Sigmoid colon (tissue), 7 donors: ENCODE measurements at regions of chr2 and their contacts with region 1.

Region 1: GRCh38 chr2:189014449-189015138 is 40.4 kb downstream of the COL3A1 start:
- DNase-seq: no peak
- H3K4me3 ChIP-seq: no peak overlapping the region
- H3K27ac ChIP-seq: peak overlapping the region; percentile 24 to 52 (median 51)
- H3K4me1 ChIP-seq: peaks cover 0 to 34% (median 14%) of the 10 kb centered on the region in 4 donors
- H3K27me3 ChIP-seq: no peaks in the 10 kb centered on the region
- CTCF ChIP-seq: no peak
- EP300 ChIP-seq: no peak
- POLR2A ChIP-seq: no peak

Region 2: DNA sequence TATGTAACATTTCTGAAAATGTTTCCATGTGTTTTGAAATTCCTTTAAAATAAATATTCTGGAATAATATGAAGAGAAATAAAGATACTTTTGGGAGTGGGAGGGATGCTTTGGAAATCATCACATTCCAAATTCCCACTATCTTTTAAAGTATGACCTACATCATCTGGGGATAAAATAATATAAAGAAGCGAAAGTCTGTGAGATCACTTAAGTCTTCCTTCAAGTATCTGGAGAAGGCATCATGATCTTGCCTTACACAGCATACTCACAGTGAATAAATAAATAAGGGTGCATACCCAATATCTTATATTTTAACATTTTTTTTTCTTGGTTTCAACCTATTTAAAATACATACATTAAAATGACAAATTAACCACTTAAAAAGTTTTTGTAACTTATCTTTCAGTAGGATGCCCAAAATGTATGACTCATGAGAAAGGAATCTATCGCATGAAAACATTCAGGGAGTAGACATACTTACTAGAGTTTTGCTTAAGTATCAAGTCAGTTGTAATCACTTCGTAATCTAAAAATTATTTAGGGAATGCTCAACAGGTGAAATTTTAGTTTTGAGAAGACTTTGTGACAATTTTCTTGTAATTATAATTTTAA is 288.7 kb before region 1 on chr2:
- intact Hi-C with region 1: no loop called
- DNase-seq: no peak
- H3K4me3 ChIP-seq: no peak overlapping the region
- H3K27ac ChIP-seq: no peak overlapping the region
- H3K4me1 ChIP-seq: peaks cover 0 to 9% (median 4%) of the 10 kb centered on the region in 4 donors
- H3K27me3 ChIP-seq: no peaks in the 10 kb centered on the region
- CTCF ChIP-seq: no peak
- EP300 ChIP-seq: no peak
- POLR2A ChIP-seq: no peak

Region 3: GRCh38 chr2:189049709-189050164 is 35.1 kb after region 1 on chr2:
- intact Hi-C with region 1: loop called (anchors 5 kb)
- DNase-seq: no peak
- H3K4me3 ChIP-seq: no peak overlapping the region
- H3K27ac ChIP-seq: no peak overlapping the region
- H3K4me1 ChIP-seq: no peaks in the 10 kb centered on the region
- H3K27me3 ChIP-seq: no peaks in the 10 kb centered on the region
- CTCF ChIP-seq: no peak
- EP300 ChIP-seq: no peak
- POLR2A ChIP-seq: no peak